PC-9 (cell line): ENCODE measurements at regions of chr6 and their contacts with region 1.

Region 1: GRCh38 chr6:80449726-80450125 is 343.3 kb downstream of the BCKDHB start:
- DNase-seq: no peak
- H3K4me3 ChIP-seq: no peak overlapping the region
- H3K27ac ChIP-seq: no peak overlapping the region
- H3K4me1 ChIP-seq: peaks cover 17% of the 10 kb centered on the region
- H3K27me3 ChIP-seq: no peaks in the 10 kb centered on the region
- CTCF ChIP-seq: no peak

Region 2: GRCh38 chr6:80165143-80165542 is 284.6 kb before region 1 on chr6:
- CTCF ChIA-PET with region 1: no interaction called
- POLR2A ChIA-PET with region 1: no interaction called
- intact Hi-C with region 1: no loop called
- DNase-seq: no peak
- H3K4me3 ChIP-seq: no peak overlapping the region
- H3K27ac ChIP-seq: peak overlapping the region; percentile 97
- H3K4me1 ChIP-seq: peaks cover 22% of the 10 kb centered on the region
- H3K27me3 ChIP-seq: no peaks in the 10 kb centered on the region
- CTCF ChIP-seq: no peak

Region 3: GRCh38 chr6:80234401-80234800 is 215.3 kb before region 1 on chr6:
- CTCF ChIA-PET with region 1: no interaction called
- POLR2A ChIA-PET with region 1: no interaction called
- intact Hi-C with region 1: no loop called
- DNase-seq: no peak
- H3K4me3 ChIP-seq: no peak overlapping the region
- H3K27ac ChIP-seq: no peak overlapping the region
- H3K4me1 ChIP-seq: no peaks in the 10 kb centered on the region
- H3K27me3 ChIP-seq: no peaks in the 10 kb centered on the region
- CTCF ChIP-seq: no peak

Region 4: GRCh38 chr6:80658926-80659325 is 209.2 kb after region 1 on chr6:
- CTCF ChIA-PET with region 1: interaction called, 19 read pairs
- POLR2A ChIA-PET with region 1: no interaction called
- intact Hi-C with region 1: no loop called
- DNase-seq: no peak
- H3K4me3 ChIP-seq: no peak overlapping the region
- H3K27ac ChIP-seq: no peak overlapping the region
- H3K4me1 ChIP-seq: no peaks in the 10 kb centered on the region
- H3K27me3 ChIP-seq: no peaks in the 10 kb centered on the region
- CTCF ChIP-seq: no peak